Naive thymus-derived CD8-positive, alpha-beta T cell (primary cell): ENCODE measurements at regions of chr4 and their contacts with region 1.

Region 1: GRCh38 chr4:40264995-40265909 is 68.4 kb downstream of the RHOH start:
- DNase-seq: peak in 9 of 10 donors; percentile 28 to 82 (median 59)
- ATAC-seq: peak; percentile 81 to 83
- H3K4me3 Mint-ChIP-seq: peak overlapping the region; percentile 68 to 91 (median 84)
- H3K27ac Mint-ChIP-seq: peak overlapping the region; percentile 94 to 99 (median 98)
- H3K4me1 Mint-ChIP-seq: peaks cover 37 to 76% (median 70%) of the 10 kb centered on the region in 4 donors
- H3K27me3 Mint-ChIP-seq: no peaks in the 10 kb centered on the region

Region 2: DNA sequence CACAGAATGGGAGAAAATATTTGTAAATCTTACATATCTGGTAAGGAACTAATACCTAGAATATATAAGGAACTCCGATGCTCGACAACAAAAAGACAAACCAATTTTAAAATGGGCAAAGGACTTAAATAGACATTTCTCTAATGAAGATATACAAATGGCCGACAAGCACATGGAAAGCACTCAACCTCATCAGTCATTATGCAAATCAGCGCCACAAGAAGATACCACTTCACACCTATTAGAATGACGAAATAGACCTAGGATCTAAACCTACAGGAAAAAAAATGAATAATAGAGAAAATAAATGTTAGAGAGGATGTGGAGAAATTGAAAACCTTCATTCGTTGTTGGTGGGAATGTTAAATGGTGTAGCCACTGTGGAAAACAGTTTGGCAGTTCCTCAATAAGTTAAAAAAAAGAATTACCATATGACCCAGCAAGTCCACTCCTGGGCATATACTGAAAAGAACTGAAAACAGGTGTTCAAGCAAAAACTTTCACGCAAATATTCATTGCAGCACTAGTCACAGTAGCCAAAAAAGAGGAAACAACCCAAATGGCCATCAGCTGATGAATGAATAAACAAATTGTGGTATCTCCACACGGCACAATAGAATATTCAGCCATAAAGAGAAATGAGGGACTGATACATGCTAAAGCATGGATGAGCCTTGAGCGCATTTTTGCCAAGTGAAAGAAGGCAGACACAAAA is 1140.2 kb before region 1 on chr4:
- POLR2A ChIA-PET with region 1: no interaction called
- DNase-seq: no peak
- ATAC-seq: no peak
- H3K4me3 Mint-ChIP-seq: no peak overlapping the region
- H3K27ac Mint-ChIP-seq: no peak overlapping the region
- H3K4me1 Mint-ChIP-seq: peaks cover 0 to 2% (median 0%) of the 10 kb centered on the region in 4 donors
- H3K27me3 Mint-ChIP-seq: no peaks in the 10 kb centered on the region

Region 3: DNA sequence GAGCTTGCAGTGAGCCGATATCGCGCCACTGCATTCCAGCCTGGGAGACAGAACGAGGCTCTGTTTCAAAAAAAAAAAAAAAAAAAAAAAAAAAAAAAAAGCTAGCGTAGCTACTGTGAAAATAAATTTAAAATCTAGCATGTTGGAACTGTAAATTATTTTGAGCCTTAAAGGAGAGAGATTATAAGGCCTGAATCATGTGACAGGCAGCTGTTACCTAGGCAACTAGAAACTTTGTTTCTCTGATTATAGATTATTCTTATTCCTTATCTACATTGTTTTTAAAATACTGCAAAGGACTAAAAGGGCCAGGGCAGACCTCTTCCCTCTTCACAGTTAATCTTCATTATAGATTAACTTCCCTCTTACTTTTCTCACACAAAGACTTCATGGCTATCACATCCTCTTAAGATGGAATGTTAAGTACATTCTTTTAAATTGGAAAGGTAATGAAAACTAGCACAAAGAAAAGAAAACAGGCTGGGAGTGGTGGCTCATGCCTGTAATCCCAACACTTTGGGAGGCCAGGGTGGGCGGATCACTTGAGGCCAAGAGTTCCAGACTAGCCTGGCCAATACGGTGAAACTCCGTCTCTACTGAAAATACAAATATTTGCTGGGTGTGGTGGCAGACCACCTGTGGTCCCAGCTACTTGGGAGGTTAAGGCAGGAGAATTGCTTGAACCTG is 266.4 kb before region 1 on chr4:
- POLR2A ChIA-PET with region 1: no interaction called
- DNase-seq: no peak
- ATAC-seq: no peak
- H3K4me3 Mint-ChIP-seq: no peak overlapping the region
- H3K27ac Mint-ChIP-seq: no peak overlapping the region
- H3K4me1 Mint-ChIP-seq: no peaks in the 10 kb centered on the region
- H3K27me3 Mint-ChIP-seq: no peaks in the 10 kb centered on the region

Region 4: GRCh38 chr4:40283968-40284367 is 18.7 kb after region 1 on chr4:
- POLR2A ChIA-PET with region 1: interaction called, 21 read pairs
- DNase-seq: peak; percentile 35 to 89 (median 74)
- ATAC-seq: peak; percentile 89 to 98
- H3K4me3 Mint-ChIP-seq: peak overlapping the region; percentile 29 to 77 (median 68)
- H3K27ac Mint-ChIP-seq: peak overlapping the region; percentile 88 to 98 (median 94)
- H3K4me1 Mint-ChIP-seq: peaks cover 33 to 84% (median 80%) of the 10 kb centered on the region in 4 donors
- H3K27me3 Mint-ChIP-seq: no peaks in the 10 kb centered on the region

Region 5: DNA sequence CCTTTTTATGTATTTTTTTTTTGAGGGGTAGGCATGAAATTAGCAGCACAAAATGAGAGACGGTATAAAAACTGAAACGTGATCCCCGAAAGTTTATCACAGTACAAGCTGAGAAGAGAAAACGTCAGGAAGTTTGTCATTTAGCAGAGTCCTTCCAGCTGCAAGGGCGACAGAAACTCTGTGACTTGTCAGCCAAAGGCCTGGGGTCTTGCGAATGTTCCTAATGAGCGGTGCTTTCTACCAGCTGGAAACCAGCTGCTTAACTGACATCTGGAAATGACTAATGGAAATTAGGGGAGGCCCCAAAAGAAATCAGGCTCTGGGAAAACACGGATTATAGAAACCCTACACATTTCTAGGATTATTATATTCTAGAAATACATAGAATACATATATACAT is 136.4 kb after region 1 on chr4:
- POLR2A ChIA-PET with region 1: no interaction called
- DNase-seq: no peak
- ATAC-seq: no peak
- H3K4me3 Mint-ChIP-seq: no peak overlapping the region
- H3K27ac Mint-ChIP-seq: no peak overlapping the region
- H3K4me1 Mint-ChIP-seq: peaks cover 0 to 2% (median 0%) of the 10 kb centered on the region in 4 donors
- H3K27me3 Mint-ChIP-seq: no peaks in the 10 kb centered on the region